Activated CD4-positive, alpha-beta T cell treated with anti-CD3 and anti-CD28 coated beads, Interleukin-2, amount 10 ng/mL, durations not matched to agents 24 days and 14 days (primary cell): ENCODE measurements at regions of chr9 and their contacts with region 1.

Region 1: DNA sequence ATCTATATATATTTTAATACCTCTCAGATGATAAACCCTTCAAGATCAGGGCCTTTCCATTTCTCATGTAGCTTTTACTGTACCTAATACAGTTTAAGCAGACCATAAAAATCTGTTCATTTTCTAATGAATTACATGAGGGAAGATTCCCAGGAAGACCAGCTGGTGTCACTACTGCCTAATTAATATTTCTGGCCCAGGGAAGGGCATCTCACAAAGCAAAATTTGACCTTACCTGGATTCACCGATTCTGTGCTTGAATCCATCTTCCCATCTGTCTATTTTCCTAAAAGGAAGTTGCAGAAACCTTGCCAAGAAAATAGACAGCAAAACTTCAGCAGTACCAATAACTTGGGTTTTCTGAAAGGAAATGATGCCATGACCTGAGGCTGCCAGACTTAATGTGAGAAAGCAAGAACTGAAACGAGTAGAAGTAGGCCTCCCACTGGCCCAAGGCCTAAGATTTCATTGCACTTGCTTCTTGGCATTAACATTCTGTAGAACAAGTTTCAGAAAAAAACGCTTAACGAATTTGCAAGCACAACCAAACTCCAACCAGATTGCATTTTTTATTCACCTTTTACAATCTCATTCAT is 83.0 kb upstream of the GLIS3 start:
- DNase-seq: no peak
- H3K4me3 Mint-ChIP-seq: no peak overlapping the region
- H3K27ac Mint-ChIP-seq: no peak overlapping the region
- H3K4me1 Mint-ChIP-seq: no peaks in the 10 kb centered on the region
- H3K27me3 Mint-ChIP-seq: peaks cover 9% of the 10 kb centered on the region

Region 2: GRCh38 chr9:3682186-3682585 is 700.6 kb before region 1 on chr9:
- intact Hi-C with region 1: no loop called
- DNase-seq: no peak
- H3K4me3 Mint-ChIP-seq: no peak overlapping the region
- H3K27ac Mint-ChIP-seq: no peak overlapping the region
- H3K4me1 Mint-ChIP-seq: no peaks in the 10 kb centered on the region
- H3K27me3 Mint-ChIP-seq: no peaks in the 10 kb centered on the region

Region 3: GRCh38 chr9:4353236-4353635 is 29.6 kb before region 1 on chr9:
- intact Hi-C with region 1: no loop called
- DNase-seq: no peak
- H3K4me3 Mint-ChIP-seq: no peak overlapping the region
- H3K27ac Mint-ChIP-seq: no peak overlapping the region
- H3K4me1 Mint-ChIP-seq: no peaks in the 10 kb centered on the region
- H3K27me3 Mint-ChIP-seq: peaks cover 7% of the 10 kb centered on the region

Region 4: DNA sequence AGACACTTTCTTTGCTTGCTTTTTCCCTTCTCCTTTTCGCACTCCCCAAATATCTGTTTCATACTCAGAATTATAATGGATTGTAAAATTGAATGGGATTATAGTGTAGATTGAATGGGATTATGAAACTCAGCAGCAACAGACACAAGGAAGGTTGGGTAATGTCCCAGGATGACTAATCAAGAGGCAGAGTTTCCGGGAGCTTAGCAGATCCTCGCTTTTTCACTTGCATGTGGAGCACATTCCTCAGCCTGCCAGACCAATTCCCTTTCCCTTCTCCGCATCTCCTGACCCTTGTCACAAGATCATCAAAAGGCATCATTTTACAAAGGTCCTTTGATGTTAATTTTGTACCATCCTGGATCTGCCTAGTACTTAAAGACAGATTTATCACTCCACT is 52.4 kb after region 1 on chr9:
- intact Hi-C with region 1: no loop called
- DNase-seq: no peak
- H3K4me3 Mint-ChIP-seq: no peak overlapping the region
- H3K27ac Mint-ChIP-seq: no peak overlapping the region
- H3K4me1 Mint-ChIP-seq: no peaks in the 10 kb centered on the region
- H3K27me3 Mint-ChIP-seq: peaks cover 8% of the 10 kb centered on the region

Region 5: DNA sequence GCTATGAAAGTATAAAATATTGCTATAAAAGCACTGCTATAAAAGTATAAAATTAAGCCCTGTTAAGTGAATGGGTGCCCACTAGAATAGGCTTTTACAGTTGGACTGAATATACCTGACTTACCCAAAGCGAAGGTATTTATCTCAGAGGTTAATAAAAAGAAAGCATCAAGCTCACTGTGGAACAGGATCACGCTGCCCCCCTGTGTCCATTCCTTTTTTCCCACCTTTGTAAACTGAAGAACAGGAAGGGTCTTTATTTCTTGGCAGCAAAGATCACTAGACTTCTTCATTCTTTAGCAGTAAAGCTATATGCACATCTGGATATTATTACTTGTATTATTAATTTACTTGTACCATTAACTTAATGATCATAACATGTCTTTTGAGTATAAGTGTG is 257.2 kb after region 1 on chr9:
- intact Hi-C with region 1: loop called (anchors 5 kb)
- DNase-seq: peak; percentile 80
- H3K4me3 Mint-ChIP-seq: no peak overlapping the region
- H3K27ac Mint-ChIP-seq: no peak overlapping the region
- H3K4me1 Mint-ChIP-seq: no peaks in the 10 kb centered on the region
- H3K27me3 Mint-ChIP-seq: peaks cover 14% of the 10 kb centered on the region